B cell (primary cell): ENCODE measurements at regions of chr6 and their contacts with region 1.

Region 1: GRCh38 chr6:32685603-32686002 is 19.1 kb upstream of the HLA-DQB1 start:
- DNase-seq: peak; percentile 90
- ATAC-seq: peak; percentile 80
- H3K4me3 ChIP-seq: peak overlapping the region in 1 of 5 experiments; percentile 48
- H3K4me3 Mint-ChIP-seq: peak overlapping the region; percentile 60
- H3K27ac ChIP-seq: peak overlapping the region; percentile 89 to 99
- H3K27ac Mint-ChIP-seq: peak overlapping the region; percentile 92
- H3K4me1 ChIP-seq: peaks cover 43 to 54% of the 10 kb centered on the region in 2 donors
- H3K4me1 Mint-ChIP-seq: peaks cover 73% of the 10 kb centered on the region
- H3K27me3 ChIP-seq: no peaks in the 10 kb centered on the region
- H3K27me3 Mint-ChIP-seq: no peaks in the 10 kb centered on the region
- CTCF ChIP-seq: no peak

Region 2: DNA sequence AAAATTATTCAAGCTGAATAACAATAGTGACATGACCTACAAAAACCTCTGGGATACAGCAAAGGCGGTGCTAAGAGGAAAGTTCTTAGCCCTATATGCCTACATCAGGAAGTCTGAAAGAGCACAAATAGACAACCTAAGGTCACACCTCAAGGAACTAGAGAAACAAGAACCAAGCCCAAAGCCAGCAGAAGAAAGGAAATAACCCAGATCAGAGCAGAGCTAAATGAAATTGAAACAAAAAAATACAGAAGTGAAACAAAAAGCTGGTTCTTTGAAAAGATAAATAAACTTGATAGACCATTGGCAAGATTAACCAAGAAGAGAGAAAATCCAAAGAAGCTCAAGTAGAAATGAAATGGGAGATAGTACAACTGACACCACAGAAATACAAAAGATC is 414.2 kb before region 1 on chr6:
- CTCF ChIA-PET with region 1: no interaction called
- POLR2A ChIA-PET with region 1: no interaction called
- intact Hi-C with region 1: loop called (anchors 10 kb)
- DNase-seq: peak; percentile 85
- ATAC-seq: peak; percentile 80
- H3K4me3 ChIP-seq: peak overlapping the region in 1 of 5 experiments; percentile 40
- H3K4me3 Mint-ChIP-seq: peak overlapping the region; percentile 44
- H3K27ac ChIP-seq: peak overlapping the region; percentile 61 to 74
- H3K27ac Mint-ChIP-seq: peak overlapping the region; percentile 81
- H3K4me1 ChIP-seq: peaks cover 62% of the 10 kb centered on the region in 2 donors
- H3K4me1 Mint-ChIP-seq: peaks cover 60% of the 10 kb centered on the region
- H3K27me3 ChIP-seq: no peaks in the 10 kb centered on the region
- H3K27me3 Mint-ChIP-seq: no peaks in the 10 kb centered on the region
- CTCF ChIP-seq: no peak

Region 3: DNA sequence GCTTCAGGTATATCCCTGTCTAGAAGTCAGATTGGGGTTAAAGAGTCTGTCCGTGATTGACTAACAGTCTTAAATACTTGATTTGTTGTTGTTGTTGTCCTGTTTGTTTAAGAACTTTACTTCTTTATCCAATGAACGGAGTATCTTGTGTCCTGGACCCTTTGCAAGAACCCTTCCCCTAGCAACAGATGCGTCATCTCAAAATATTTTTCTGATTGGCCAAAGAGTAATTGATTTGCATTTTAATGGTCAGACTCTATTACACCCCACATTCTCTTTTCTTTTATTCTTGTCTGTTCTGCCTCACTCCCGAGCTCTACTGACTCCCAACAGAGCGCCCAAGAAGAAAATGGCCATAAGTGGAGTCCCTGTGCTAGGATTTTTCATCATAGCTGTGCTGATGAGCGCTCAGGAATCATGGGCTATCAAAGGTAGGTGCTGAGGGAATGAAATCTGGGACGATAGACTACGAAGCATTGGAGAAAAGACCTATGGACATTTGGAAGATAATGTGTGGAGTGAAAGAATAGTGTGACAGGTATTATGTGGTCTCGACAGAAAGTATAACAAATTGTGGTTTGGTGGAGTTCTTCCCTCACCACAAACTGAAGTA is 245.9 kb before region 1 on chr6 and contains the start of gene HLA-DRA:
- CTCF ChIA-PET with region 1: interaction called, 77 read pairs
- POLR2A ChIA-PET with region 1: interaction called, 12 read pairs
- intact Hi-C with region 1: no loop called
- DNase-seq: peak; percentile 97
- ATAC-seq: peak; percentile 69
- H3K4me3 ChIP-seq: peak within 1 kb of the TSS; percentile 77 to 100 (median 99)
- H3K4me3 Mint-ChIP-seq: peak within 1 kb of the TSS; percentile 98
- H3K27ac ChIP-seq: peak within 1 kb of the TSS; percentile 99 to 100
- H3K27ac Mint-ChIP-seq: peak within 1 kb of the TSS; percentile 99
- H3K4me1 ChIP-seq: peaks cover 70 to 71% of the 10 kb centered on the region in 2 donors
- H3K4me1 Mint-ChIP-seq: peaks cover 80% of the 10 kb centered on the region
- H3K27me3 ChIP-seq: no peaks in the 10 kb centered on the region
- H3K27me3 Mint-ChIP-seq: no peaks in the 10 kb centered on the region
- CTCF ChIP-seq: no peak
- total RNA-seq, gene HLA-DRA: 2,785 and 2,881 TPM in 2 replicates